B cell (primary cell): ENCODE measurements at regions of chr7 and their contacts with region 1.

Region 1: DNA sequence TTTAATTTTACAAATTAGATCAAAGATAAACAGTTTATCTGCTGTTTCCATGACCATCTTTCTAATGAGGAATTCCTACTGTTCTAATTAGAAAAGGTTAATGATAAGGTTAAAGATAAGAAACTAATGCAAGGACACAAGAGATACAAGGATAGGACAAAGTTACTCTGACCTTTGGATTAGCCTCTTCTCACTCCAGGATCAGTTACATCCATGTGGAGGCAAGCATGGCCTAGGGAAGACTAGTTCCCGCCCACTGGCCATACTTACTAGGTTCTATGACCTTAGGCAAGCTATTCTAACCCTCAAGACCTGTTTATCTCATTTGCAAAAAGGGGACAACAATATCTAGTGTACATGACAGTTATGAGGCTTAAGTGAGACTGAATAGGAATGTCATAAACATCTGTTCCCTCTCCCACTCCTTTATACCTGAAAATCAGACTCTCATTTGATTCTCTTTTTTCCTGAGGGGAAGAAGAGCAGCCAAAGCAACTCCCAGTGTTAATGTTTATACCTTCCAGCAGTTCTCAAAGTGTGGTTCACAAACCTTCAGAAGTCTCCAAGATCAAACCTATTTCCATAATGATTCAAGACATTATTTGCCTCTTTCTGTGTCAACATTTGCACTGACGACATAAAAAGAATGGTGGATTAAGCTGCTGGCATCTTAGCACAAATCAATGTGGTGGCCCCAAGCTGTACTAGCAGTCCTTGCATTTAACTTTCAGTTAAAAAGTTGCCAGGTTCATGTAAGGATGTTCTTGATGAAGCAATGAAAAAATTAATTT is 72.0 kb downstream of the SRPK2 start:
- DNase-seq: no peak
- ATAC-seq: no peak
- H3K4me3 ChIP-seq: no peak overlapping the region
- H3K4me3 Mint-ChIP-seq: no peak overlapping the region
- H3K27ac ChIP-seq: no peak overlapping the region
- H3K27ac Mint-ChIP-seq: no peak overlapping the region
- H3K4me1 ChIP-seq: peaks cover 0 to 3% of the 10 kb centered on the region in 2 donors
- H3K4me1 Mint-ChIP-seq: peaks cover 51% of the 10 kb centered on the region
- H3K27me3 ChIP-seq: no peaks in the 10 kb centered on the region
- H3K27me3 Mint-ChIP-seq: no peaks in the 10 kb centered on the region
- CTCF ChIP-seq: no peak

Region 2: GRCh38 chr7:105245398-105246114 is 71.2 kb before region 1 on chr7:
- CTCF ChIA-PET with region 1: no interaction called
- POLR2A ChIA-PET with region 1: no interaction called
- intact Hi-C with region 1: no loop called
- DNase-seq: no peak
- ATAC-seq: peak; percentile 45
- H3K4me3 ChIP-seq: no peak overlapping the region
- H3K4me3 Mint-ChIP-seq: no peak overlapping the region
- H3K27ac ChIP-seq: peak overlapping the region in 1 of 2 donors; percentile 43
- H3K27ac Mint-ChIP-seq: no peak overlapping the region
- H3K4me1 ChIP-seq: peaks cover 24 to 26% of the 10 kb centered on the region in 2 donors
- H3K4me1 Mint-ChIP-seq: peaks cover 33% of the 10 kb centered on the region
- H3K27me3 ChIP-seq: no peaks in the 10 kb centered on the region
- H3K27me3 Mint-ChIP-seq: no peaks in the 10 kb centered on the region
- CTCF ChIP-seq: no peak

Region 3: DNA sequence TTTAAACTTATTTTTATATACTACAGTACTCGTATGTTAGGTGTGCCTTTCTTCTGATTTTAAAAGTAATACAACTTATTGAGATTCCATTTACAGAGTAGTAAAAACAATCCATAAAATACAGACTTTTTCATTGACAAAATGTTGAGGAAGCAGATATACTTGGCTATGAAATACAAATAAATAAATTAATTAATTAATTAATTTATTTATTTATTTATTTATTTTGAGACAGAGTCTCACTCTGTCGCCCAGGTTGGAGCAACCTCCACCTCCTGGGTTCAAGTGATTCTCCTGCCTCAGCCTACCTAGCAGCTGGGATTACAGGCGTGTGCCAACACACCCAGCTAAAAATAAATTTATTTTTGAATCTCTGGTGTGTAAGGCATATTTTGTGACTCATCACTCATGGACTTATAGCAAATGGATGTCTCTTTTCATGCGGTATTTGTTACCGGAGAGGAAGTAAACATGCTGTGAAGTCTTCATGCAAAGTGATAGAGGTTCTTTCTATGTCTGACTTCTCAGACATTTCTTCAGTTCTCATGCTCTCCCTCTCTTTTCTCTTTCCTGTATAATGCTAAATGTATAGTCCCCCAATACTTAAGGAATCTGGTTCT is 92.2 kb after region 1 on chr7:
- CTCF ChIA-PET with region 1: no interaction called
- POLR2A ChIA-PET with region 1: interaction called, 10 read pairs
- intact Hi-C with region 1: no loop called
- DNase-seq: no peak
- ATAC-seq: no peak
- H3K4me3 ChIP-seq: no peak overlapping the region
- H3K4me3 Mint-ChIP-seq: no peak overlapping the region
- H3K27ac ChIP-seq: no peak overlapping the region
- H3K27ac Mint-ChIP-seq: no peak overlapping the region
- H3K4me1 ChIP-seq: no peaks in the 10 kb centered on the region
- H3K4me1 Mint-ChIP-seq: no peaks in the 10 kb centered on the region
- H3K27me3 ChIP-seq: no peaks in the 10 kb centered on the region
- H3K27me3 Mint-ChIP-seq: no peaks in the 10 kb centered on the region
- CTCF ChIP-seq: no peak